ENCODE measurements at regions of chr17 and their contacts with region 1.

Region 1: DNA sequence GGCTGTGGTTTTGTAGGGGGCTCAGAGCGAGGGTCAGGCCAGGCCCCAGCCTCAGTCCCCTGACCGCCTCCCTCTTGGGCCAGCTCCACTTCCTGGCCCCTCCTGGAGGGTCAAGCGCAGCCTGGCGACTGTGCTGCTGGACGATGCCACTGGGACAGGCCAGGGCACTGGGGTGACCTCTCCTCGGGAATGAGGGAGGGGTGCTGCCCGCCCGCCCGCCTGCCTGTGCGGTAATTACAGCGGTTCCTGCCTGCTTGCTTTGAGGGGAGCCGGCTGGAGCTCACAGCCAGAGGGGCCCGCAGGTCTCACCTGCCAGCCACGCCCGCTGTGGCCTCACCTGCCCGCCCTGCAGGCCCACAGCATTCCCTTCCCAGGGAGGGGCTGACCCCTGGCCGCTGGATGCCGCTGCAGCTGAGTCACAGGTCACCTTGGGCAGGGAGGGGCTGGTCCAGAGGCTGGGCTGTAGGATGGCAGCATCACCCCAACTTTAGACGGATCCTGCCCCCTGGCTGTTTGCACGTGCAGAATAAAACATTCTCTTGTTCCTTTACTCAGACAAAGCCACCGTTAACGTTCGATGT is 76.7 kb upstream of the CBX4 start:
- H3K4me3 Mint-ChIP-seq: no peak overlapping the region
- H3K27ac Mint-ChIP-seq: no peak overlapping the region
- H3K4me1 Mint-ChIP-seq: peaks cover 5% of the 10 kb centered on the region
- H3K27me3 Mint-ChIP-seq: peaks cover 34% of the 10 kb centered on the region

Region 2: DNA sequence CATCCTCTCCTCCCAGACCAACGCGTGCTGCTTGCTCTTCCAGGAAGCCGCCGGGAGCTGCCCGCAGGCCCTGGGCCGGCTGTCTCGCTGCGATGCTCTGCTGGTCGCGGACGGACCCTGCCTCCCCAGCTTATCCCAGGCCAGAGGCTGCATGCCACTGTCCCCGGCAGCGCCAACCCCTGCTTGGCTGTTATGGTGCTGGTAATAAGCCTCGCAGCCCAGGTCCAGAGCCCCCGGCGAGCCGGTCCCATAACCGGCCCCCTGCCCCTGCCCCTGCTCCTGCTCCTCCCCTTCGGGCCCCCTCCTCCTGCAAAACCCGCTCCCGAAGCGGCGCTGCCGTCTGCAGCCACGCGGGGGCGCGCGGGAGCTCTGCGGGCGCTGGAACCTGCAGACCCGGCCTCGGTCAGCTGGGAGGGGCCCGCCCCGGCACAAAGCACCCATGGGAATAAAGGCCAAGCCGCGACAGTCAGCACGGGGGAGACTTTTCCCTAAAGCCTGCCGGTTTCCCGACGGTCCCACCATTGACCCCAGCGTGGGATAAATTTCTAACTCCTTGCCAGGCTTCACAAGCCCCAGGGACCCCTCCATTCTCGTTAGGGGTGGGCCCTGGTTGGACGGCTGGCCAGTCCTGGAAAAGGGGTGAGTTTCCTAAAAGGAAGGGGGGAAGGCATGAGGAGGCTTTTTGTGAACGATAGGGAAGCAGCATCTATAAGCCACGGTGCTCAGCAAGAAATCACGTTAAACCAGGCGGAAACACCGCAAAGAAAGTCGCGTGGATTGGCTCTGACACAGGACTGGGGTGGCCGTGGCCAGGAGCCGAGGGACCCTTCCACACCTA is 174.0 kb before region 1 on chr17:
- intact Hi-C with region 1: loop called (anchors 5 kb)
- H3K4me3 Mint-ChIP-seq: no peak overlapping the region
- H3K27ac Mint-ChIP-seq: no peak overlapping the region
- H3K4me1 Mint-ChIP-seq: no peaks in the 10 kb centered on the region
- H3K27me3 Mint-ChIP-seq: peaks cover 87% of the 10 kb centered on the region

Region 3: GRCh38 chr17:79977708-79978547 is 62.0 kb after region 1 on chr17:
- intact Hi-C with region 1: no loop called
- H3K4me3 Mint-ChIP-seq: no peak overlapping the region
- H3K27ac Mint-ChIP-seq: no peak overlapping the region
- H3K4me1 Mint-ChIP-seq: peaks cover 8% of the 10 kb centered on the region
- H3K27me3 Mint-ChIP-seq: peaks cover 3% of the 10 kb centered on the region